CD4-positive, alpha-beta memory T cell (primary cell): ENCODE measurements at regions of chr22 and their contacts with region 1.

Region 1: DNA sequence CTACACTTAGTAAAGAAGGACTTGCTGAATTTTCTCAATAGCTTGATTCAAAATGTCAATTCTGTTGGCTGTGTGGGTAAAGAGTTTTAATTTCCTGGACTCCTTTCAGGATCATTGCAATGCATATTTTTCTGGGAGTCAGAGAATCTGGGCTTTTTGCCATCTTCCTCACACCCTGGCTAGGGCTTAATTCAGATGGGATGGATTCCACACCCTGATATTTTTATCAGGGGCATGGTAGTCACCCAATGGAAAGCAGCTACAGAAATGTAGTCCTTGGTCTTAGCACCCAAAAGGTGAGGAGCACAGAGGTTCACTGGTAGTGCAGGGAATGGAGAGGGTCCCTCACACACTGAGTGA is 79.3 kb downstream of the SGSM3 start:
- DNase-seq: no peak
- H3K4me3 ChIP-seq: no peak overlapping the region
- H3K4me3 Mint-ChIP-seq: peak overlapping the region in 7 of 8 donors; percentile 3 to 63 (median 31)
- H3K27ac ChIP-seq: no peak overlapping the region
- H3K27ac Mint-ChIP-seq: peak overlapping the region in 6 of 7 donors; percentile 13 to 84 (median 56)
- H3K4me1 ChIP-seq: peaks cover 75% of the 10 kb centered on the region
- H3K4me1 Mint-ChIP-seq: peaks cover 51 to 92% (median 70%) of the 10 kb centered on the region in 4 donors
- H3K27me3 ChIP-seq: no peaks in the 10 kb centered on the region
- H3K27me3 Mint-ChIP-seq: no peaks in the 10 kb centered on the region

Region 2: GRCh38 chr22:40463017-40463631 is 13.5 kb after region 1 on chr22:
- CTCF ChIA-PET with region 1: interaction called, 6 read pairs
- POLR2A ChIA-PET with region 1: interaction called, 45 read pairs
- intact Hi-C with region 1: loop called (anchors 1 kb)
- DNase-seq: peak; percentile 36 to 58 (median 47)
- H3K4me3 ChIP-seq: peak overlapping the region; percentile 59 to 75
- H3K4me3 Mint-ChIP-seq: peak overlapping the region; percentile 78 to 99 (median 98)
- H3K27ac ChIP-seq: peak overlapping the region; percentile 64
- H3K27ac Mint-ChIP-seq: peak overlapping the region; percentile 89 to 95 (median 93)
- H3K4me1 ChIP-seq: peaks cover 57% of the 10 kb centered on the region
- H3K4me1 Mint-ChIP-seq: peaks cover 48 to 70% (median 61%) of the 10 kb centered on the region in 4 donors
- H3K27me3 ChIP-seq: no peaks in the 10 kb centered on the region
- H3K27me3 Mint-ChIP-seq: no peaks in the 10 kb centered on the region

Region 3: DNA sequence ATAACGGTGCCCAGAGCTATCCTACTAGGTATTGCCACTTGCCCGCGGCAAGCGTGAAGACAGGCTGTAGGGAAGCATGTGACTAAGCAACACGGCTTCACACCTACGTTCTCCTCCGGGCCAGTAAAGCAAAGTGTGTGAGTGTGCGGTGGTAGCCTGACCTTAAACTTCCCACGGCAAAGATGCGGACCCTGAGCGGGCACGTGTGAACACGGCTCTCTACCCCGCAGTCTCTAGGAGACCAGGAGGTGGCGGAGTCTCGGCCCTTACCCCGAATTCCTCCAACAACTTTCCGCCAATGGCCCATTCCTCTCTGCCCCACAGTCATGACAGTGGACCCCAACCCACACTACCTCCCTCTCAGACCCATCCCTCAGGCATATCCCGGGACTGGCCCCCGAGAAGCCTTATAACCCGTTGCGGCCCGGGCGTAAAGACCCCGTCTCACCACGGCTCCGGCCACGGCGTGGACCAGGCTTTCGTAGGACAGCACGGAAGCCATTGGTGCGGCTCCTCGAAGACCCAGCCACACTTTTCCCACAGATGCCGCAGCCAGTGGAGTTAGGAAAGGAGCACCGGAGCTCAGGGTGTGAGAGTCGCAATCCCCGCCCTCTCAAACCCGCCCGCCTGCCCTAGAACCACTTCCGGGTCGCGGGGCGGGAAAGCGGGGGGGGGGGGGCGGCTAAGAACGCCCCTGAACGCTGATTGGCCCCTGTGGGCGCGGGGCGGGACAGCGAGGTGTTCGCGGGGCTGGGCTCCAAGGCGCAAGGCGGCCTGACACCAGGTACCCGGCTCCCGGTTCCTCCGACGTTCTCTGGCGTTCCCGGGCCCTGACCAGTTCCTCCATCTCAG is 369.3 kb after region 1 on chr22 and contains the start of gene SLC25A17:
- CTCF ChIA-PET with region 1: no interaction called
- POLR2A ChIA-PET with region 1: no interaction called
- intact Hi-C with region 1: no loop called
- DNase-seq: peak; percentile 81 to 84 (median 82)
- H3K4me3 ChIP-seq: peak within 1 kb of the TSS; percentile 92 to 95
- H3K4me3 Mint-ChIP-seq: peak within 1 kb of the TSS; percentile 92 to 99 (median 97)
- H3K27ac ChIP-seq: peak within 1 kb of the TSS; percentile 81
- H3K27ac Mint-ChIP-seq: peak within 1 kb of the TSS; percentile 82 to 98 (median 95)
- H3K4me1 ChIP-seq: peaks cover 27% of the 10 kb centered on the region
- H3K4me1 Mint-ChIP-seq: peaks cover 29 to 46% (median 36%) of the 10 kb centered on the region in 4 donors
- H3K27me3 ChIP-seq: no peaks in the 10 kb centered on the region
- H3K27me3 Mint-ChIP-seq: no peaks in the 10 kb centered on the region
- total RNA-seq, gene SLC25A17: 15.4 to 15.6 TPM